ENCODE measurements at regions of chr6 and their contacts with region 1.

Region 1: GRCh38 chr6:11188161-11188915 is 44.1 kb downstream of the NEDD9 start:
- DNase-seq: no peak
- H3K4me3 ChIP-seq: no peak overlapping the region
- H3K27ac ChIP-seq: no peak overlapping the region
- H3K4me1 ChIP-seq: peaks cover 0 to 2% (median 0%) of the 10 kb centered on the region in 4 experiments; a peak in 2 of 7 replicates
- H3K27me3 ChIP-seq: no peaks in the 10 kb centered on the region
- CTCF ChIP-seq: no peak
- EP300 ChIP-seq: no peak
- POLR2A ChIP-seq: no peak
- RAD21 ChIP-seq: no peak

Region 2: GRCh38 chr6:10256113-10256690 is 932.1 kb before region 1 on chr6:
- CTCF ChIA-PET with region 1: no interaction called
- POLR2A ChIA-PET with region 1: no interaction called
- DNase-seq: peak in 1 of 2 experiments; percentile 55
- H3K4me3 ChIP-seq: no peak overlapping the region
- H3K27ac ChIP-seq: no peak overlapping the region
- H3K4me1 ChIP-seq: no peaks in the 10 kb centered on the region
- H3K27me3 ChIP-seq: peaks cover 0 to 1% (median 0%) of the 10 kb centered on the region in 4 experiments; a peak in 1 of 7 replicates
- CTCF ChIP-seq: peak in 2 of 3 experiments; percentile 35 to 47; a peak in 2 of 4 replicates
- EP300 ChIP-seq: no peak
- POLR2A ChIP-seq: no peak
- RAD21 ChIP-seq: peak; percentile 34 to 48

Region 3: DNA sequence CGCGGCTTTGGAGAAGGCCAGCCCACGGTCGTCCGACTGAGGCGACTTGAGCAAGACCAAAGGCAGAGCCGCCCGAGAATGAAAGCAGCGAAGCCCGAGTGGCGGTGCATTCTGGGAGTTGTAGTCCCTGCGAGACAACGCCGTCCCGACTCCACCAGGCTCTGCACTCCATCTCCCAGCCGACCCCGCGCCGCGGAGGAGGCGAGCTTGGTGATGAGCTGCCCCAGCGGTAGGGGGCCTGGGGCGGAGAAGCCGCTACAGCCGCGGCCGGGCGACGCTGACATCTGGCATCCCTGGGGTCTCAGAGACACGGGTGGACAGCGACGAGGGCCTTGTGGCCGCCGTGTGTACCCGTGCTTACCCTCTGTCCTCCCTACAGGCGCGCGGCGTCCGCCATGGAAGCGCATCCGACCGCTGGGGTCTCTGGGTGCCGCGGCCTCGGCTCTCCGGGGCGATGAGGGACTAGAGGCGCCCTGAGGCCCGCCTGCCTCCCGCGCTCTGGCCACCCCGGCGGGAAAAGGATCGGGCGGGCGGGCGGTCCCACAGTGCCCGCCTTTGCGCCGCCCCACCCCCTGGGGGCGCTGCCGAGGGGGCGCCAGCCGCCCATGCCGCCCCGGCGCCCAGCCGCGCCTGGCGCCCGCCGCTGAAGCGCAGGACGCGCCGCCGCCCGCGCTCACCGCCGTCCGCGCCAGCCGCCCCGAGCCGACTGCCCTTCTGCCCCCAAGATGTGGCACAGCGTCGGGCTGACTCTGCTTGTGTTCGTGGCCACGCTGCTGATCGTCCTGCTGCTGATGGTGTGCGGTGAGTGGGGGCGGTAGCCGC is 94.5 kb before region 1 on chr6 and contains the start of gene SMIM13:
- CTCF ChIA-PET with region 1: no interaction called
- POLR2A ChIA-PET with region 1: no interaction called
- DNase-seq: peak; percentile 94 to 95
- H3K4me3 ChIP-seq: peak within 1 kb of the TSS; percentile 63 to 99 (median 77)
- H3K27ac ChIP-seq: peak within 1 kb of the TSS; percentile 87
- H3K4me1 ChIP-seq: peaks cover 0 to 5% (median 2%) of the 10 kb centered on the region in 4 experiments; a peak in 5 of 7 replicates
- H3K27me3 ChIP-seq: no peaks in the 10 kb centered on the region
- CTCF ChIP-seq: peak; percentile 2 to 61 (median 36); a peak in 3 of 4 replicates
- EP300 ChIP-seq: 0 out of 3 replicates have a peak, but pooled peaks of 1 of the 2 experiments have one; percentile 14
- POLR2A ChIP-seq: peak in 1 of 2 experiments; percentile 63; a peak in 2 of 3 replicates
- RAD21 ChIP-seq: peak in 1 of 2 experiments; percentile 29; a peak in 1 of 4 replicates
- total RNA-seq, gene SMIM13: 10.6 TPM in 2 replicates

Region 4: GRCh38 chr6:11172501-11173332 is 15.6 kb before region 1 on chr6:
- CTCF ChIA-PET with region 1: interaction called, 62 read pairs
- POLR2A ChIA-PET with region 1: no interaction called
- DNase-seq: peak; percentile 49 to 95
- H3K4me3 ChIP-seq: 0 out of 8 replicates have a peak overlapping the region, but pooled peaks of 1 of the 4 experiments have one; percentile 19
- H3K27ac ChIP-seq: no peak overlapping the region
- H3K4me1 ChIP-seq: peaks cover 0 to 7% (median 0%) of the 10 kb centered on the region in 4 experiments; a peak in 2 of 7 replicates
- H3K27me3 ChIP-seq: no peaks in the 10 kb centered on the region
- CTCF ChIP-seq: peak; percentile 84 to 92 (median 88)
- EP300 ChIP-seq: no peak
- POLR2A ChIP-seq: no peak
- RAD21 ChIP-seq: peak; percentile 76 to 86

Region 5: DNA sequence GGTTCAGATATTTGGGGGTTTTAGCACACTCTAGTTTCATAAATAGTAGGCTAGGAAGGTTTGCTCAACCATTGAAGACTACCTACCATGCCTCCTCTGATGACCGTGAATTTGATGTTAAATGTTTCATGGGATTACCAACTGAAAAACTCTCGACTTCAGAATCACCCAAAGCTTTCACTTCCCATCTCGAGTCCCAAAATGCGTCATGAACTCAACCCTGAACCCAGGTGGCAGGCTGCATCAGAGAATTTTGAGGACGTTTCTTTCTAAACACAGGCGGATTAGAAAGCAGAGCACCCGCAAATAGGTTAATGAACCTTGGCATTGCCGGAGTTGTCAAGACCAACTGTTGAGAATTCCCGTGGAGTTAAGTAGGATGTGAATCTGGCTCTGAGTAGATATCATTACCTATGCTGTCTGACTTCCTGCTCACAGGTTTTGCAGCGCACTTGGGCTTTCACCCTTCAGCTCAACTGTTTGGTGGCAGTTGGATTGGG is 688.6 kb after region 1 on chr6:
- CTCF ChIA-PET with region 1: no interaction called
- POLR2A ChIA-PET with region 1: no interaction called
- DNase-seq: no peak
- H3K4me3 ChIP-seq: no peak overlapping the region
- H3K27ac ChIP-seq: no peak overlapping the region
- H3K4me1 ChIP-seq: peaks cover 0 to 7% (median 0%) of the 10 kb centered on the region in 4 experiments; a peak in 2 of 7 replicates
- H3K27me3 ChIP-seq: no peaks in the 10 kb centered on the region; a peak in 1 of 7 replicates
- CTCF ChIP-seq: no peak
- EP300 ChIP-seq: no peak
- POLR2A ChIP-seq: no peak
- RAD21 ChIP-seq: no peak